Posterior vena cava (tissue), 2 donors: ENCODE measurements at regions of chr5 and their contacts with region 1.

Region 1: GRCh38 chr5:172496671-172497371 is 42.5 kb upstream of the SH3PXD2B start:
- DNase-seq: peak; percentile 83

Region 2: GRCh38 chr5:171427318-171428167 is 1069.3 kb before region 1 on chr5:
- intact Hi-C with region 1: no loop called
- DNase-seq: peak; percentile 68

Region 3: GRCh38 chr5:171736976-171737891 is 759.6 kb before region 1 on chr5:
- intact Hi-C with region 1: loop called in 1 of 2 experiments (anchors 5 kb)
- DNase-seq: no peak

Region 4: DNA sequence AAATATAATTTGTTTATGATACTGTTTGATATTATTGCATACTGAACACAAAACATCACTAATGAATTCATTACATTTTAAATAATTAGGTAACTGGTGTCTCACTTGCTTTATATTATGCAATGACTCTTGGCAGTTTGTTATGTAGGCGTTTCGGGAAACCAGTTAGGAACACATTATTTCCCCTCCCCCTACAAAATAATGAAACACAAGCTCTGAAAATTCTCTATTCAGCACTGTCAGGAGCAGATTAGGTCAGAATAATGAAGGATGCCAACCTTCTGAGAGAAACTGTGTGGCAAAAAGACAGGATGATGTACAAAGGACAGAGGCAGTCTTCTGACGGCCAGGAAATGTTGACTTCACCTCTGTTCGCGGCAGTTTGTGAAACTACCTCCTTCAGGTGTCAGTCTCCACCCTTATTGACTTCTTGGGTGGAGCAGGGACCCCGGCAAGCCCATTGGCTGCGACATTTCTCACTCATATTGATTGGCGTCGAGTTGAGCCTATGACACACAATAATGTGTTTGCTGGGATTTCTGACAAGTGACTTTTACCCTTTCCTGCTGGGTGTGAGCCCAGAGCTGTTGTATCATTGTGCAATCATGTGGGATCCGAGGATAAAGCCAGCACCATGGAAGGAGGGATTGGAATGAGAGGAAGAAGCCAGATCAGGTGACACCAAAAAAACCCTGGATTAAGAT is 76.4 kb before region 1 on chr5:
- intact Hi-C with region 1: no loop called
- DNase-seq: peak; percentile 43

Region 5: DNA sequence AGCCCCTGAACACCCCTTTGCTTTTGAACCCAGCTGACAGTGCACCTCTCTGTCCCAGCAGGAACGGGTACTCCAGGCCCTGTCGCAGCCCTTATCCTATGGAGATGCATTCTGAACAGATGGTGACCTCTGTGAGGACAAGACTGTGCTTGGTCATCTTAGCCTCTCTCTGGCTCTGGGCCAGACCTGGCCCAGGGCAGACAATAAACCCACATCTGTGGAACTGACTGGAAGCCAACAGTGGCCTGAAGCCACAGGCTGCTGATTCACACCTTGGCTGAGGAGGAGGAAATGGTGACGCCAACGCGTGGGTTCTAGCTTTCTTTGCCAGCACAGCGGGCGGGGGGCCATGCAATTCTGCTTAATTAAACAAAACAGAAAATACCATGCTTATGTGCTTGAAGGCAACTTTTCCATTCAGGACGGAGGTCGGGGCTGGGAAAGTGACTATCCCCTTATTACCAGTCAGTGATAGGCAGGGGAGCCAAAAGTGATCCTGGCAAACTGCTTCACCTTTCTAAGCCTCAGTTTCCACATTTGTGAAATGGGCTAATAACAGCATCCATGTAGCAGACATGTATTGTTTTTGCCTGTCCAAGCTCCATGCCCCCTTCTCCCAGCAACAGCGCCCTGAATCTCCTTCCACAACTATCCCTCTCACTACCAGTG is 53.2 kb before region 1 on chr5:
- intact Hi-C with region 1: no loop called
- DNase-seq: peak; percentile 96